ENCODE measurements at regions of chr2 and their contacts with region 1.

Region 1: DNA sequence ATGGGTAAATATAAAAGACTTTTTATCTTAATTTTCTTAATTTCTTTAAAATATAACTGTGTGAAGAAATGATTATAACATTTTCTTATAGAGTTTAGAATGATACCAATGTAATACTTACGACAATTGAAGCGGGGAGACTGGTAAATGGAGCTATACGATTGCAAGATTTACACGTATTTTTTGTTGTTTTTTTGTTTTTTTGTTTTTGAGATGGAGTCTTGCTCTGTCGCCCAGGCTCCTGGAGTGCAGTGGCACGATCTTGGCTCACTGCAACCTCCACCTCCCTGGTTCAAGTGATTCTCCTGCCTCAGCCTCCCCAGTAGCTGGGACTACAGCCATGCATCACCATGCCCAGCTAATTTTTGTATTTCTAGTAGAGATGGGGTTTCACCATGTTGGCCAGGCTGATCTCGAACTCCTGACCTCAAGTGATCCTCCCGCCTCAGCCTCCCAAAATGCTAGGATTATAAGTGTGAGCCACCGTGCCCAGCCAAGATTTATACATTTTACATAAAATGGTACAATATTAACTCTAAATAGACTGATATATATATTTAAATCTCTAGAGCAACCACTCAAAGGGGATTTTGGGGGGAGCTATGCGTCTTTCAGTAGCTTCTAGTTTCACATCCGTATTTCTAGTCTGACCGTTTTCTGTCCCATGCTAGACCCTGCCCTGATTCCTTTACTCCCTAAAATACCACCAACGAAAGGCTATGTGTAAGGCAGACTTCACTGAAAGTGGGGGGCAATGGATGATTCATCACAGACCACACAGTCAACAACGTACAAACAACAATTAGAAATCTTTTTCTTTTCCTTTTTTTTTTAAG is 28.2 kb upstream of the ATG16L1 start:
- DNase-seq: no peak
- H3K4me3 ChIP-seq: no peak overlapping the region
- H3K27ac ChIP-seq: no peak overlapping the region
- H3K4me1 ChIP-seq: peaks cover 0 to 5% (median 0%) of the 10 kb centered on the region in 4 experiments; a peak in 2 of 7 replicates
- H3K27me3 ChIP-seq: no peaks in the 10 kb centered on the region
- CTCF ChIP-seq: no peak
- EP300 ChIP-seq: no peak
- POLR2A ChIP-seq: no peak
- RAD21 ChIP-seq: no peak

Region 2: GRCh38 chr2:233234264-233234663 is 11.0 kb after region 1 on chr2:
- CTCF ChIA-PET with region 1: interaction called, 13 read pairs
- POLR2A ChIA-PET with region 1: interaction called, 3 read pairs
- DNase-seq: no peak
- H3K4me3 ChIP-seq: no peak overlapping the region
- H3K27ac ChIP-seq: no peak overlapping the region
- H3K4me1 ChIP-seq: no peaks in the 10 kb centered on the region; a peak in 1 of 7 replicates
- H3K27me3 ChIP-seq: no peaks in the 10 kb centered on the region
- CTCF ChIP-seq: no peak
- EP300 ChIP-seq: no peak
- POLR2A ChIP-seq: no peak
- RAD21 ChIP-seq: no peak

Region 3: GRCh38 chr2:233244818-233245217 is 21.5 kb after region 1 on chr2:
- CTCF ChIA-PET with region 1: no interaction called
- POLR2A ChIA-PET with region 1: no interaction called
- DNase-seq: no peak
- H3K4me3 ChIP-seq: no peak overlapping the region
- H3K27ac ChIP-seq: no peak overlapping the region
- H3K4me1 ChIP-seq: no peaks in the 10 kb centered on the region
- H3K27me3 ChIP-seq: peaks cover 0 to 1% (median 0%) of the 10 kb centered on the region in 4 experiments; a peak in 1 of 7 replicates
- CTCF ChIP-seq: no peak
- EP300 ChIP-seq: no peak
- POLR2A ChIP-seq: no peak
- RAD21 ChIP-seq: no peak

Region 4: DNA sequence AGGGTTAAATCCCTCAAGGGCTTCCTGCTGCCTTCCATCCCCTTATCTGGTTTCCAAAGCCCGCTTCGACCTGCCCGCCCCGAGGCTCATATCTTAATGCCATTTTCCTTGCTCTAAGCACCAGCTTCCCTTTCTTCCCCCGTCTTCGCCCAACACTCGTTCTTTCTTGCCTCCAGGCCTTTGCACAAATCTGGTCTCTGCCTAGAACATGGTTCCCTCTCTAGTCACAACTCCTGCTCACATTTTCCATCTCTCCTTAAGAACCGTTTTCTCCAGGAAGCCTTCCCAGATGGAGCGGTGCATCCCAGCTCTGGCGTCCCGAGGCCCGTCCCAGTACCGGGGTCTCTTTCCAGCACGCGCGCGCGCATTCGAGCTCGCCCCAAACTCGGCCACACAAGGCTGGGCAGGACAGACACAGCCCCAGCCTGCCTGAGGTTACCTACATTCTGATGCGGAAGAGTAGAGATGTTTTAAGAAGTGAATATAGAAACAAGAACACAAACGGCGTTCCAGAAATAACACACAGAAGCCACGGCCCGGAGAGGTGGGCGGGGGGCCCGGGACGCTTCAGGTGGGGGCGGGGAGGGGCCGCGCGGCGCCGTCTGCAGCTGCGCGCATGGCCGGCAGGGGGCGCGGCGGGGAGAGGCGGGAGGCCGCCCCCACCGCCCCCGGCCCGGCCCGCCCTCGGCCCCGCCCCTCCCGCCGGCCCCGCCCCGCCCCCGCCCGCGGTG is 130.7 kb after region 1 on chr2 and contains the start of gene DGKD:
- CTCF ChIA-PET with region 1: no interaction called
- POLR2A ChIA-PET with region 1: no interaction called
- DNase-seq: peak in 1 of 2 experiments; percentile 84
- H3K4me3 ChIP-seq: peak within 1 kb of the TSS; percentile 53 to 90 (median 72)
- H3K27ac ChIP-seq: no peak within 1 kb of the TSS; the same call in 1 of the 2 replicates
- H3K4me1 ChIP-seq: peaks cover 0 to 5% (median 4%) of the 10 kb centered on the region in 4 experiments; a peak in 4 of 7 replicates
- H3K27me3 ChIP-seq: peaks cover 0 to 28% (median 15%) of the 10 kb centered on the region in 4 experiments; a peak in 5 of 7 replicates
- CTCF ChIP-seq: peak in 2 of 3 experiments; percentile 9 to 61; a peak in 1 of 4 replicates
- EP300 ChIP-seq: no peak
- POLR2A ChIP-seq: no peak
- RAD21 ChIP-seq: no peak
- total RNA-seq, gene DGKD: 30.9 and 31.3 TPM in 2 replicates

Region 5: GRCh38 chr2:233375490-233376314 is 152.4 kb after region 1 on chr2:
- CTCF ChIA-PET with region 1: no interaction called
- POLR2A ChIA-PET with region 1: no interaction called
- DNase-seq: no peak
- H3K4me3 ChIP-seq: no peak overlapping the region
- H3K27ac ChIP-seq: no peak overlapping the region
- H3K4me1 ChIP-seq: peaks cover 0 to 3% (median 1%) of the 10 kb centered on the region in 4 experiments; a peak in 4 of 7 replicates
- H3K27me3 ChIP-seq: no peaks in the 10 kb centered on the region; a peak in 1 of 7 replicates
- CTCF ChIP-seq: no peak
- EP300 ChIP-seq: no peak
- POLR2A ChIP-seq: no peak
- RAD21 ChIP-seq: no peak

Measured in H1 (cell line).